ENCODE measurements at regions of chr13 and their contacts with region 1.

Region 1: DNA sequence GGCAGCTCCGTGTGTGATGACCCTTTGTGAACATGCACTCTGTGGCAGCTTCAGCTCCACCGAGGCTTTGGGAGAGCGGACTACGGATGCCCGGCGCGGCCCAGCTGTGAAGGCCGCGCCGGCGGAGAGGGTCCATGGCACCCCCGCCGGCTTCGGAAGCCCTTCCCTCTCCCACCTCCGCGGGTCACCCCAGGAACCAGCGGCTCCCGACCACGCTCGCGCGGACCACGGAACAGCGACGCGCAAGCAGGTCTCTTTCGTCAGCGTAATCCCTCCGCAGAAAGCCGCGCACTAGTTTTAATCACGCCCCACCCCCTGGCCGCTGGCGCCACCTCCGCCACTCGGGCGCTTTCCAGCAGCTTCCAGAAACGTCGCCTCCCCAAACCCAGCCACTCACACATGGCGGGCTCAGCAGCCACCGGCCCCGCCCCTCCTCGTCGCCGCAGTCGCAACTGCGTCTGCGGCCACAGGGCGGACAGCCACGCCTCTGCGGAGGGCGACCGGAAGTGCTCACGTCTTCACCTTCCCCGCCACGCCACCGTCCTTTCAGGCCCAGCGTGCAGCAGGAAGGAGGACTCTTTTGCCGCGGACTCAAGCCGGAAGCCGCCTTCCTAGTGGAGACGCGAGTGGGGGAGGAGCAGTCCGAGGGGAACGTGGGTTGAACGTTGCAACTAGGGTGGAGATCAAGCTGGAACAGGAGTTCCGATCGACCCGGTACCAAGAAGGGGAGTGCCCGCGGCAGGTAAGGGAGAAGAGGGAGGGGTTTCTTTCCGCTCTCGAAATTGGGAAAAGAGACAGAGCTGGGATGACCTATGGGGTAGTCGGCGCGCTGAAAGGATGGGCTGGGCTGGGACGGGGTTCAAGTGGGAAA is at the start of gene USPL1:
- DNase-seq: peak; percentile 92 to 99 (median 99)
- ATAC-seq: peak; percentile 95
- H3K4me3 ChIP-seq: peak within 1 kb of the TSS; percentile 84
- H3K4me3 Mint-ChIP-seq: no peak within 1 kb of the TSS
- H3K27ac ChIP-seq: peak within 1 kb of the TSS; percentile 97
- H3K27ac Mint-ChIP-seq: no peak within 1 kb of the TSS
- H3K4me1 ChIP-seq: peaks cover 11 to 13% of the 10 kb centered on the region in 2 donors
- H3K4me1 Mint-ChIP-seq: peaks cover 13 to 53% (median 36%) of the 10 kb centered on the region in 7 donors
- H3K27me3 ChIP-seq: no peaks in the 10 kb centered on the region
- H3K27me3 Mint-ChIP-seq: no peaks in the 10 kb centered on the region
- total RNA-seq, gene USPL1: 22.4 to 34.7 (median 30.4) TPM

Region 2: DNA sequence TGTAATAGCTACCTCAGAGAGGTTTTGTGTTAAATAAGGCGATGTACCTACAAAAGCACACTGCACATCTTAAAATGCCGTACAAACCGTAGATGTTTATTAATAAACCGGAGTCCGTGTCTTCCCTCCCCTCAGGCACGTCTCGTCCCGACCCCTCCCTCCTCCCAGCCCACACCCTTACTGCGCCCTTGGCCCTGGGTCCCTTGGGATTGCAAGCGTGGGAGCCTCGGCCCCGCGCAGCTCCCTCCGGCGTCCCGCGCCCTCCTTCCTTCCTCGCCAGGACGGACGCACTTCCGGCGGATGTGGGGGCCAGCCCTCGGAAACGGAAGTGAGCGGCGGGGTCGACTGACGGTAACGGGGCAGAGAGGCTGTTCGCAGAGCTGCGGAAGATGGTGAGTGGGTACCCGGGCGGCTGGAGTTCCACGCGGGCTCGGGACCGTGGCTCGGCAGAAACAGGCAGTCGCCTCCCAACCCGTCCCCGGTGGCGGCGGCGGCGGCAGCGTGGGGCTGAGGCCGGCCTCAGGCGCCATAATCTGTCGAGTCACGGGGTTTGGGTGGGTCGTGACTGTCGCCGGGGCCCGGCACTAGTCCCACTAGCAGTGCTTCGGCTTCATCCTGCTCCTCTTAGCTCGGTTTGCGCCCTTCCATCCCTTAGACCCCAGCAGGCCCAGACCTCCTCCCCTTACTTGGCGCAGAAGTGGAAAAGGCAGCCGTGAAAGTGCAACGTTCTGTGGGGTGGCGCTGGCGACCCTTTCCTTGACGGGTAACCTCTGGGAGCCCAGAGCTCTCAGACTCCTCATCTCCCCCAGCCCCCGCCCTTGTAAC is 1958.5 kb before region 1 on chr13 and contains the start of gene POMP:
- CTCF ChIA-PET with region 1: no interaction called
- POLR2A ChIA-PET with region 1: no interaction called
- intact Hi-C with region 1: loop called in 1 of 2 experiments (anchors 5 kb)
- DNase-seq: peak; percentile 83 to 96 (median 93)
- ATAC-seq: peak; percentile 95
- H3K4me3 ChIP-seq: peak within 1 kb of the TSS; percentile 86
- H3K4me3 Mint-ChIP-seq: peak within 1 kb of the TSS; percentile 88 to 100 (median 98)
- H3K27ac ChIP-seq: peak within 1 kb of the TSS; percentile 96
- H3K27ac Mint-ChIP-seq: peak within 1 kb of the TSS; percentile 94 to 99 (median 99)
- H3K4me1 ChIP-seq: peaks cover 25 to 29% of the 10 kb centered on the region in 2 donors
- H3K4me1 Mint-ChIP-seq: peaks cover 38 to 84% (median 69%) of the 10 kb centered on the region in 7 donors
- H3K27me3 ChIP-seq: no peaks in the 10 kb centered on the region
- H3K27me3 Mint-ChIP-seq: no peaks in the 10 kb centered on the region
- total RNA-seq, gene POMP: 18.8 to 97.0 (median 21.2) TPM

Region 3: GRCh38 chr13:29923554-29924481 is 693.7 kb before region 1 on chr13:
- CTCF ChIA-PET with region 1: no interaction called
- POLR2A ChIA-PET with region 1: no interaction called
- intact Hi-C with region 1: no loop called
- DNase-seq: peak in 5 of 9 donors; percentile 20 to 55 (median 21)
- ATAC-seq: peak; percentile 86
- H3K4me3 ChIP-seq: no peak overlapping the region
- H3K4me3 Mint-ChIP-seq: no peak overlapping the region
- H3K27ac ChIP-seq: no peak overlapping the region
- H3K27ac Mint-ChIP-seq: peak overlapping the region in 1 of 9 donors; percentile 32
- H3K4me1 ChIP-seq: no peaks in the 10 kb centered on the region
- H3K4me1 Mint-ChIP-seq: peaks cover 0 to 36% (median 13%) of the 10 kb centered on the region in 7 donors
- H3K27me3 ChIP-seq: no peaks in the 10 kb centered on the region
- H3K27me3 Mint-ChIP-seq: peaks cover 0 to 3% (median under 1%) of the 10 kb centered on the region in 5 donors

Region 4: GRCh38 chr13:30132623-30133553 is 484.7 kb before region 1 on chr13:
- CTCF ChIA-PET with region 1: interaction called, 4 read pairs
- POLR2A ChIA-PET with region 1: no interaction called
- intact Hi-C with region 1: loop called (anchors 1 kb)
- DNase-seq: peak; percentile 91 to 98 (median 95)
- ATAC-seq: peak; percentile 99
- H3K4me3 ChIP-seq: peak overlapping the region; percentile 16
- H3K4me3 Mint-ChIP-seq: peak overlapping the region in 8 of 10 donors; percentile 33 to 73 (median 64)
- H3K27ac ChIP-seq: no peak overlapping the region
- H3K27ac Mint-ChIP-seq: peak overlapping the region in 8 of 9 donors; percentile 11 to 89 (median 72)
- H3K4me1 ChIP-seq: peaks cover 4 to 7% of the 10 kb centered on the region in 2 donors
- H3K4me1 Mint-ChIP-seq: peaks cover 12 to 19% (median 17%) of the 10 kb centered on the region in 7 donors
- H3K27me3 ChIP-seq: no peaks in the 10 kb centered on the region
- H3K27me3 Mint-ChIP-seq: no peaks in the 10 kb centered on the region

Region 5: GRCh38 chr13:30395192-30396084 is 222.1 kb before region 1 on chr13:
- CTCF ChIA-PET with region 1: no interaction called
- POLR2A ChIA-PET with region 1: interaction called, 13 read pairs
- intact Hi-C with region 1: loop called (anchors 1 kb)
- DNase-seq: peak; percentile 22 to 83 (median 71)
- ATAC-seq: peak; percentile 82
- H3K4me3 ChIP-seq: peak overlapping the region; percentile 71
- H3K4me3 Mint-ChIP-seq: peak overlapping the region; percentile 83 to 97 (median 88)
- H3K27ac ChIP-seq: peak overlapping the region; percentile 78
- H3K27ac Mint-ChIP-seq: peak overlapping the region; percentile 90 to 97 (median 95)
- H3K4me1 ChIP-seq: peaks cover 16 to 31% of the 10 kb centered on the region in 2 donors
- H3K4me1 Mint-ChIP-seq: peaks cover 17 to 58% (median 54%) of the 10 kb centered on the region in 7 donors
- H3K27me3 ChIP-seq: no peaks in the 10 kb centered on the region
- H3K27me3 Mint-ChIP-seq: no peaks in the 10 kb centered on the region

Region 6: DNA sequence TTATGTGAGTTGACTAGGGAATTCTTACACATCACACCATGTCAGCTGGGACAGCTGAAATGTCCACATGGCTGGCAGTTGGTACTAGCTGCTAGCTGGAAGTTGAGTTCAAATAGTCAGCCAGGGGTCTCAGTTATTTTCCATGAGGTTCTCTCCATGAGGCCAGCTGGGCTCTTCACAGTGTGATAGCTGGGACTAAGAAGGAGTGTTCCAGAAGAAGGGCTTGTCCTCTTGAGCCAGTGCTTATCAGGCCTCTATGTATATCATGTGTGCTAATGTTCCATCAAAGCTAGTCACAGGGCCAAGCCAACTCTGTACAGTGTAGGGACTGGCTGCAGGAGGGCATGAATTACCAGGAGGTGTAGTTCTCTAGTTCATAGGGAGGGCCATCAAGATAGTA is 12.0 kb after region 1 on chr13:
- CTCF ChIA-PET with region 1: interaction called, 6 read pairs
- POLR2A ChIA-PET with region 1: interaction called, 13 read pairs
- intact Hi-C with region 1: loop called in 1 of 2 experiments (anchors 1 kb)
- DNase-seq: no peak
- ATAC-seq: no peak
- H3K4me3 ChIP-seq: no peak overlapping the region
- H3K4me3 Mint-ChIP-seq: peak overlapping the region in 2 of 10 donors; percentile 10 to 24
- H3K27ac ChIP-seq: no peak overlapping the region
- H3K27ac Mint-ChIP-seq: peak overlapping the region in 4 of 9 donors; percentile 19 to 80 (median 74)
- H3K4me1 ChIP-seq: peaks cover 4% of the 10 kb centered on the region in 2 donors
- H3K4me1 Mint-ChIP-seq: peaks cover 34 to 68% (median 62%) of the 10 kb centered on the region in 7 donors
- H3K27me3 ChIP-seq: no peaks in the 10 kb centered on the region
- H3K27me3 Mint-ChIP-seq: no peaks in the 10 kb centered on the region

Region 7: GRCh38 chr13:30708541-30708940 is 91.0 kb after region 1 on chr13:
- CTCF ChIA-PET with region 1: no interaction called
- POLR2A ChIA-PET with region 1: no interaction called
- intact Hi-C with region 1: no loop called
- DNase-seq: no peak
- ATAC-seq: no peak
- H3K4me3 ChIP-seq: no peak overlapping the region
- H3K4me3 Mint-ChIP-seq: no peak overlapping the region
- H3K27ac ChIP-seq: no peak overlapping the region
- H3K27ac Mint-ChIP-seq: no peak overlapping the region
- H3K4me1 ChIP-seq: no peaks in the 10 kb centered on the region
- H3K4me1 Mint-ChIP-seq: peaks cover 0 to 21% (median 0%) of the 10 kb centered on the region in 7 donors
- H3K27me3 ChIP-seq: no peaks in the 10 kb centered on the region
- H3K27me3 Mint-ChIP-seq: peaks cover 0 to 10% (median 4%) of the 10 kb centered on the region in 5 donors

Region 8: DNA sequence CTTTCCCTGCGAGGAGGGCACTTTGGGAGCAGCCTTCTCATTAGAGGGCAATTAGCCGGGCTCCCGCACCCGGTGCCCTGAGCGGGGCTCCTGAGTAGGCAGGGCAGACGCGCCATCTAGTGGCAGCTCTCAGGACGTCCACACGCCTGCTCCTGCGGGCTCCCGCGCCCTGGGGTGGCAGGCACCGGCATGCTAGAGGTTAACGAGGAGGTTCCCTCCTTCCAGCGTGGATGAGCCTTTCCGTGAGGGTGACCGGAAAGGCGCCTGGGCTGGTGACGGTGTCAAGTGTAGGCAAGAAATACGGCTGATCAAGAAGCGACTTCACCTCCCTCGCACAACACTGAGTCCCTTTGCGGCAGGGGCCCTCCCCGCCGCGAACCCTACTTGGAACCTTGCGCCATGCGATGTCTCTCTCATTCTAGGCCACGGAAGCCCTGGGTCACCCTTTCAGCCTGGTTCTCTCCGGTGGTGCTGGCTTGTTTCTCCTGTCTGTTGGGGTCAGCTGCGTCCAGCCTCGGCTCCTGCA is 185.5 kb after region 1 on chr13:
- CTCF ChIA-PET with region 1: no interaction called
- POLR2A ChIA-PET with region 1: interaction called, 5 read pairs
- intact Hi-C with region 1: loop called (anchors 1 to 2 kb)
- DNase-seq: peak; percentile 54 to 83 (median 70)
- ATAC-seq: peak; percentile 97
- H3K4me3 ChIP-seq: peak overlapping the region; percentile 27
- H3K4me3 Mint-ChIP-seq: peak overlapping the region; percentile 17 to 75 (median 51)
- H3K27ac ChIP-seq: no peak overlapping the region
- H3K27ac Mint-ChIP-seq: peak overlapping the region in 1 of 9 donors; percentile 12
- H3K4me1 ChIP-seq: peaks cover 3 to 7% of the 10 kb centered on the region in 2 donors
- H3K4me1 Mint-ChIP-seq: peaks cover 5 to 19% (median 10%) of the 10 kb centered on the region in 7 donors
- H3K27me3 ChIP-seq: no peaks in the 10 kb centered on the region
- H3K27me3 Mint-ChIP-seq: peaks cover 0 to 5% (median 0%) of the 10 kb centered on the region in 5 donors

Measured in naive thymus-derived CD4-positive, alpha-beta T cell (primary cell).